Tibial artery (tissue), 4 donors: ENCODE measurements at regions of chr6 and their contacts with region 1.

Region 1: GRCh38 chr6:90393232-90393884 is 96.7 kb upstream of the BACH2 start:
- DNase-seq: peak in 1 of 2 donors; percentile 46
- H3K4me3 ChIP-seq: no peak overlapping the region
- H3K27ac ChIP-seq: no peak overlapping the region
- H3K4me1 ChIP-seq: no peaks in the 10 kb centered on the region
- H3K27me3 ChIP-seq: no peaks in the 10 kb centered on the region
- CTCF ChIP-seq: peak; percentile 76 to 84

Region 2: DNA sequence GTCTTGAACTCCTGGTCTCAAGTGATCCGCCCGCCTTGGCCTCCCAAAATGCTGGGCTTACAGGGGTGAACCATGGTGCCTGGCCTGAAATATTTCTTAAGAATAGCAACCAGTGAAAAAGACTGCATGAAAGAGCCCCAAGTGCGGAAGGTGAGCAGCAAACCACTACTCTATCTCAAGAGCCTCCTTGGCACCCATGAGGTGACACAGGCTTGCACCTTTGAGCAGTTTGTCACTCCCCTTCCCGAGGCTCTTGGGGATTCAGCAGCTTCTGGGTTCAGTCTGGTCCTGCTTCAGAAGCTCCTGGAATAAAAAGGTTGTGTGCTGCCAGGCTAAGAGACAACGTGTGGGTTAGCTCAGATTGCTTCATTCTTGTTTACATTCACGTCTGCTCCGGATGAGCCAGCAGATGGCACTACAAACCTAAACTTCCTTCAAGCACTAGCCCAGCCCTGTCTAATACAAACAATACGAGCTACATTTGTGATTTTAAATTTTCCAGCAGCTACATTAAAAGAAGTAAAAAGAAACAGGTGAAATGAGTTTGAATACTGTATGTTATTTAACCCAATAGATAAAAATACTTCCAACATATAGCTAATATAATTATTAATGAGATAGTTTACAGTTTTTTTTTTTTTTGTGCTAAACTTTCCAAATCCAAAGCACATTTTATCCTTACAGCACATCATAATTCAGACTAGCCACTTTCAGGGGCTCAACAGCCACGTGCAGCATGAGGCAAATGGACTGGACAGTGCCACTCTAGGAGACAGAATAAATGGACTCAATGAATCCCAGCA is 452.9 kb before region 1 on chr6:
- intact Hi-C with region 1: loop called (anchors 10 kb)
- DNase-seq: peak; percentile 74 to 84
- H3K4me3 ChIP-seq: no peak overlapping the region
- H3K27ac ChIP-seq: no peak overlapping the region
- H3K4me1 ChIP-seq: peaks cover 0 to 19% (median 7%) of the 10 kb centered on the region in 4 donors
- H3K27me3 ChIP-seq: no peaks in the 10 kb centered on the region
- CTCF ChIP-seq: peak; percentile 56 to 65

Region 3: DNA sequence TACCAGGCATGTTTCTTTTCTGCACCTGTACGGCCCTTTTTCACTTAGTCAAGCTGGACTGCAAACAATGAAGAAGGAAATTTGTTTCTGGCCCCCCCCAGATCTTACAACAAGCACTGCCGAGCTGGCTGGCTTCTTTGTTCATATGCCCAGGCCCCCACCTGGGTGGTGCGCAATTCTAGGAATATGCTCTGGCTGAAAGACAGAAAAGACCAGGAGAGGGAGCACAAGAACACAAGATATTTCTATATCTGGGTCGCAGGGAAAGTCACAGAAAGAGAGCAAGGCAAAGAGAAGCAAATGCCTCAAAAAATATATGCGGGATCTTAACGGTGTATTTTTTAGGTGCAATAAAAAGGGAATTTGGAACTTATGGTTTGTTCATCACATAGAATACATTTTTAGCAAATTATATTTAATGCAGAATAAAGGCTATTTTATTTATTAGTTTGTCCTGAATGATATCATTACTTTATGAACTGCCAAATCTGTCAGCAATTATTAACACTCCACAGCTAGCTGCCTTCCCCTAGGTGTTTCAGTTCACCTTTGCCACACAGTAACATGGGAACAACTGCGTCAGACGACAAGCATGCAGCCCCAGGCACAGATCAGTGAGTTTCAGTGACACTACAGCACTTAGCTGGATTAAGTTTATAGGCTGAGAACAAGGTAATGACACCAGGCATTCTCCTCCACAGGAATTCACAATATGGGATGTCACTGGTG is 422.6 kb before region 1 on chr6:
- intact Hi-C with region 1: loop called (anchors 5 kb)
- DNase-seq: no peak
- H3K4me3 ChIP-seq: no peak overlapping the region
- H3K27ac ChIP-seq: no peak overlapping the region
- H3K4me1 ChIP-seq: no peaks in the 10 kb centered on the region
- H3K27me3 ChIP-seq: no peaks in the 10 kb centered on the region
- CTCF ChIP-seq: peak; percentile 42 to 73